Activated CD4-positive, alpha-beta memory T cell treated with anti-CD3 and anti-CD28 coated beads for 36 hours (primary cell): ENCODE measurements at regions of chr17 and their contacts with region 1.

Region 1: GRCh38 chr17:18225121-18225566 is 291 bp upstream of the LLGL1 start:
- DNase-seq: peak; percentile 97
- H3K4me3 Mint-ChIP-seq: peak overlapping the region; percentile 61
- H3K27ac Mint-ChIP-seq: peak overlapping the region; percentile 28
- H3K4me1 Mint-ChIP-seq: peaks cover 31% of the 10 kb centered on the region
- H3K27me3 Mint-ChIP-seq: no peaks in the 10 kb centered on the region

Region 2: DNA sequence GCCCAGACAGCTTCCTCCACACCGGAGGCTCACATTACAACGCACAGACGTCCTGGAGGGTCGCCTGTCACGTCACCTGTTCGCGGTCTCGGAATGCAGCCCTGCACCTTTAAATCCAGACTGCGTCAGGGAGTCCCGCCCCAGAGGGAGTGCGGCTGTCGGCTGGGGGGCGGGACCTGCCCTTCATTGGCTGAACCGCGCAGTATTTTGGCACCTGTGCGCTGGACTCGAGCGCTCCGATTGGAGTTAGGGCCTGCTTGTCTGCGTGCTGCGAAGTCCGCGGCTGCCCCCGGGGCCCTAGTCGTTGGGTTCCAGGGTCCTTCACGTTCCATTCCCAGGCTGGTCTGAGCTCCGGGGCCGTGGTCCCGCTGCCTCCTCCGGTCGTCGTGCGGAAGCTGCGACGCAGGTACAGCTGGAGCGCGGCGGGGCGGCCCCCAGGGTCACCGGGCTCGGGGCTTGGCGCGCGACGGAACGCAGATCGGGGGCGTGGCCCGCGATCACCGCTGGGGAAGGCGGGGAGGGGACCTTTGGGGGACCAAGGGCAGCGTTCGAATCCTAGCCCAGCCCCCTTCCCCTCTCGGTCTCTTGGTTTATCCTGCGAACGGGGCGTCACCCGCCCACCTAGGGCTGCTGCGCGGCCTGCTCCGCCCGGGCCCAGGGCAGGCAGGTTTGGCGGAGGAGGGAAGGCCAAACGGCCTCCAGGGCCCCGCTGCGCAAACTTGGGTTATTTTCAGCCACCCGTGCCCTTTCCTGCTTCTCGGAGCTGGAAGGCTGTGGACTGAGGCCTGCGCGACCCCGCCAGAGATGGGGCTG is 35.4 kb after region 1 on chr17 and contains the start of gene MIEF2:
- CTCF ChIA-PET with region 1: no interaction called
- POLR2A ChIA-PET with region 1: no interaction called
- intact Hi-C with region 1: loop called (anchors 2 kb)
- DNase-seq: peak; percentile 95
- H3K4me3 Mint-ChIP-seq: peak within 1 kb of the TSS; percentile 75
- H3K27ac Mint-ChIP-seq: peak within 1 kb of the TSS; percentile 75
- H3K4me1 Mint-ChIP-seq: peaks cover 43% of the 10 kb centered on the region
- H3K27me3 Mint-ChIP-seq: no peaks in the 10 kb centered on the region
- total RNA-seq, gene MIEF2: 6.5 to 6.8 TPM